ENCODE measurements at regions of chr5 and their contacts with region 1.

Region 1: DNA sequence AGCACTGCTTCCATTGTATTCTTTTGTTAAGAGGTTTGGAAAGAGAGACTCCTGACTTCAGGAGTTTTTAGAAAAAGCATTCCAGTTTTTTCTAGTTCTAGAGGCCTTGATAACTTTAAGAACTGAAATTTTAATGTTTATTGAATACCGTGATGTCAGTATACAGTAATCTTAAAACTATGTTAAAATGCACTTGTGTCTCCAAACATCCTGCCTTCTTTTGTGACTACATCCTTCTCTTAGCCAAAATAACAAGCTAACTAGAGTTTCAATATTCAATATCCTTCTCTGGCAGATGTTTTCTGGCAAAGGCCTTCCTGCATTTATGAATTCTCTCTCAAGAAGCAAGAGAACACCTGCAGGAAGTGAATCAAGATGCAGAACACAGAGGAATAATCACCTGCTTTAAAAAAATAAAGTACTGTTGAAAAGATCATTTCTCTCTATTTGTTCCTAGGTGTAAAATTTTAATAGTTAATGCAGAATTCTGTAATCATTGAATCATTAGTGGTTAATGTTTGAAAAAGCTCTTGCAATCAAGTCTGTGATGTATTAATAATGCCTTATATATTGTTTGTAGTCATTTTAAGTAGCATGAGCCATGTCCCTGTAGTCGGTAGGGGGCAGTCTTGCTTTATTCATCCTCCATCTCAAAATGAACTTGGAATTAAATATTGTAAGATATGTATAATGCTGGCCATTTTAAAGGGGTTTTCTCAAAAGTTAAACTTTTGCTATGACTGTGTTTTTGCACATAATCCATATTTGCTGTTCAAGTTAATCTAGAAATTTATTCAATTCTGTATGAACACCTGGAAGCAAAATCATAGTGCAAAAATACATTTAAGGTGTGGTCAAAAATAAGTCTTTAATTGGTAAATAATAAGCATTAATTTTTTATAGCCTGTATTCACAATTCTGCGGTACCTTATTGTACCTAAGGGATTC is 43.1 kb downstream of the NDFIP1 start:
- DNase-seq: no peak
- ATAC-seq: peak; percentile 71 to 81
- H3K4me3 ChIP-seq: no peak overlapping the region
- H3K27ac ChIP-seq: no peak overlapping the region
- H3K4me1 ChIP-seq: no peaks in the 10 kb centered on the region
- H3K27me3 ChIP-seq: no peaks in the 10 kb centered on the region
- CTCF ChIP-seq: peak; percentile 87

Region 2: DNA sequence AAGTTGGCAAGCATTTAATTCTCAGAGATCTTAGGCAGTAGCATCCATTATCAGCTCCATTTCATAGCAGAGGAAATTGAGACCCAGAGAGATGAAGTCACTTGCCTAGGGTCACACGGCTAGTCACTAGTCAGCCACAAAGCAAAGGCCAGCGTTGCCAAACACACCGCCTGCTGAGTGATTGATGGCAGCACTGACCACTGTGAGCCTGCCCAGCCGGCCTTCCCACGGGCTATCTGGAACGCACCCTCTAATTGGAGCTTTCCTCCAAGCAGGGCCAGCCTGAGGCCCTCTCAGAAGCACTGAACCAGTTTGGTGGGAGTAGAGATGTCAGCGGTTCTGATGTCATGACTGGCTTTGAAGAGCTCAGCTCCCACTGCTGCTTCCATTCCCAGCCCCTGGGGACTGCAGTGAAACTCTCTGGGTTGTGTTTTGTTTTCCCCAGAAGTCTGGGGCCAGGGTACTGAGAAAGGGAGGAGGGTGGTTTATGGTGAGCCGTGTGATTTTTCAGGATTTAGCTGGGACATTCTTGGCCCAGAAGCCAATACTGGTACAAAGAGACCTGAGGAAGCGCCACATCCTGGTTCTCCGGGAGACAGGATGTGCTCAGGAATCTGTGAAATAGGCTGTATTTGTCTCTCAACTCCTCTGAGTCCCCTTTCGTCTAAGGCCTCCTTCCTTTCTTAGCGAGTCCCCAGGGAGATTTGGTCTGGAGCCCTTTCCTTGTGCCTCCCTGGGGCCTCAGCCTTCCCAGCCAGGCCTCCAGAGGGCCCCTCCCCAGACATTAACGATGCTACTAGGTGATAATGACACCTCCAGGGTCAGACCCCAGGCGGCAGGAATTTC is 128.6 kb after region 1 on chr5:
- intact Hi-C with region 1: no loop called
- DNase-seq: no peak
- ATAC-seq: peak; percentile 40 to 47
- H3K4me3 ChIP-seq: no peak overlapping the region
- H3K27ac ChIP-seq: peak overlapping the region; percentile 64
- H3K4me1 ChIP-seq: peaks cover 6% of the 10 kb centered on the region
- H3K27me3 ChIP-seq: no peaks in the 10 kb centered on the region
- CTCF ChIP-seq: no peak

Region 3: GRCh38 chr5:142548739-142549275 is 397.1 kb after region 1 on chr5:
- intact Hi-C with region 1: loop called (anchors 10 kb)
- DNase-seq: no peak
- ATAC-seq: peak; percentile 92 to 94
- H3K4me3 ChIP-seq: no peak overlapping the region
- H3K27ac ChIP-seq: no peak overlapping the region
- H3K4me1 ChIP-seq: peaks cover 20% of the 10 kb centered on the region
- H3K27me3 ChIP-seq: peaks cover 18% of the 10 kb centered on the region
- CTCF ChIP-seq: peak; percentile 69

Measured in lower lobe of right lung (tissue), 2 donors.